ENCODE measurements at regions of chr4 and their contacts with region 1.

Region 1: GRCh38 chr4:158172261-158173258 is at the start of gene GASK1B:
- DNase-seq: peak in 4 of 5 donors; percentile 39 to 57 (median 50)
- ATAC-seq: peak; percentile 49 to 74 (median 65)
- H3K4me3 ChIP-seq: peak within 1 kb of the TSS; percentile 30 to 73 (median 67)
- H3K27ac ChIP-seq: peak within 1 kb of the TSS; percentile 82 to 93 (median 88)
- H3K4me1 ChIP-seq: peaks cover 0 to 64% (median 41%) of the 10 kb centered on the region in 12 donors
- H3K27me3 ChIP-seq: no peaks in the 10 kb centered on the region
- CTCF ChIP-seq: peak; percentile 41 to 78 (median 71)
- POLR2A ChIP-seq: no peak
- total RNA-seq, gene GASK1B: 34.5 to 108 (median 73.9) TPM

Region 2: DNA sequence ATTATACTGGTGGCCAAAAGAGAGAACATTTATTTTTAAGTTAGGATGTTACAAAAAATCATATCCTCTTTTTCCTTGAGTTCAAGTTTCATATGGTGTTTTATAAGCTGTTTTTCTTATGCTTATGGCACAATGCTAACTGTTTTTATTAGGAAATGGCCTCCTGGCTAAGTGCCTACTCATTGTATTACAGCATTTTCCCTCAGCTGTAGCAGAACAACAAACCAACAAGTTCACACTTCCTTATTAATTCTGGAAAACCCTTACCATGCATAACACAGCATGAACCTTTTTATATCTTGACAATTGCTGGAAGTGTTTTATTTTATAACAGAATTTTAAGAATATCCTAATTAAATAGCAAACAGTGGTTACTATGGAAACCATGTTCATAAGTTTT is 165.6 kb before region 1 on chr4:
- intact Hi-C with region 1: loop called in 2 of 10 experiments (anchors 5 kb)
- DNase-seq: peak in 2 of 5 donors; percentile 51 to 67
- ATAC-seq: peak; percentile 35 to 92 (median 77)
- H3K4me3 ChIP-seq: peak overlapping the region in 2 of 12 donors; percentile 1 to 6
- H3K27ac ChIP-seq: peak overlapping the region in 10 of 12 donors; percentile 47 to 79 (median 64)
- H3K4me1 ChIP-seq: peaks cover 0 to 76% (median 38%) of the 10 kb centered on the region in 12 donors
- H3K27me3 ChIP-seq: no peaks in the 10 kb centered on the region
- CTCF ChIP-seq: no peak
- POLR2A ChIP-seq: no peak

Region 3: GRCh38 chr4:158129694-158130093 is 42.9 kb before region 1 on chr4:
- intact Hi-C with region 1: loop called in 3 of 10 experiments (anchors 5 kb)
- DNase-seq: no peak
- ATAC-seq: peak in 1 of 4 donors; percentile 36
- H3K4me3 ChIP-seq: no peak overlapping the region
- H3K27ac ChIP-seq: no peak overlapping the region
- H3K4me1 ChIP-seq: peaks cover 0 to 38% (median 16%) of the 10 kb centered on the region in 12 donors
- H3K27me3 ChIP-seq: no peaks in the 10 kb centered on the region
- CTCF ChIP-seq: no peak
- POLR2A ChIP-seq: no peak

Region 4: GRCh38 chr4:158209825-158210807 is 37.6 kb after region 1 on chr4 and contains the start of gene TMEM144:
- intact Hi-C with region 1: loop called in 1 of 10 experiments (anchors 5 kb)
- DNase-seq: peak; percentile 90 to 96 (median 93)
- ATAC-seq: peak; percentile 99 to 100 (median 99)
- H3K4me3 ChIP-seq: peak within 1 kb of the TSS in 11 of 12 donors; percentile 18 to 61 (median 54)
- H3K27ac ChIP-seq: peak within 1 kb of the TSS; percentile 85 to 96 (median 91)
- H3K4me1 ChIP-seq: peaks cover 0 to 35% (median 9%) of the 10 kb centered on the region in 12 donors
- H3K27me3 ChIP-seq: no peaks in the 10 kb centered on the region
- CTCF ChIP-seq: peak in 6 of 12 donors; percentile 12 to 47 (median 35)
- POLR2A ChIP-seq: peak in 1 of 2 donors; percentile 72
- total RNA-seq, gene TMEM144: 6.8 to 17.7 (median 12.5) TPM

Region 5: DNA sequence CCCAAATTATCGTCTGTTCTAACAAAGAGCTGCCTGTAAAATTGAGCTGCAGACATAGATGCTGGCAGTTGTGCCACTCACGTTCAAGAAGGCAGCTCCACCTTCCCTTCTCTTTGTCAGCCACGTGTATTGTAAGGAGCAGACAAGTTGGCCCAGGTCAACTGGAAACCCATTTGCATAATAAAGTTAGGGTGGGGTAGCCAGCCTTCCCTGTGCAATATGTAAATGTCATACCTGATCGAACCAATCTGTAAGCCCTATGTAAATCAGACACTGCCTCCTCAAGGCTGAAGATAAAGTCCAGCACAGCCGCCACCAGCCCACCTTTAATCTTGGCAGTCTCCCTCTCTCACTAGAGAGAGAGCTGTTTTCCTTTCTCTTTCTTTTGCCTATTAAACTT is 155.0 kb after region 1 on chr4:
- intact Hi-C with region 1: no loop called
- DNase-seq: no peak
- ATAC-seq: no peak
- H3K4me3 ChIP-seq: no peak overlapping the region
- H3K27ac ChIP-seq: no peak overlapping the region
- H3K4me1 ChIP-seq: no peaks in the 10 kb centered on the region
- H3K27me3 ChIP-seq: no peaks in the 10 kb centered on the region
- CTCF ChIP-seq: no peak
- POLR2A ChIP-seq: no peak

Region 6: GRCh38 chr4:158671915-158672806 is 499.6 kb after region 1 on chr4 and contains the start of gene ETFDH:
- intact Hi-C with region 1: loop called in 1 of 10 experiments (anchors 5 kb)
- DNase-seq: peak; percentile 99 to 100 (median 100)
- ATAC-seq: peak; percentile 92 to 96 (median 95)
- H3K4me3 ChIP-seq: peak within 1 kb of the TSS; percentile 61 to 91 (median 80)
- H3K27ac ChIP-seq: peak within 1 kb of the TSS; percentile 93 to 98 (median 96)
- H3K4me1 ChIP-seq: peaks cover 0 to 47% (median 20%) of the 10 kb centered on the region in 12 donors
- H3K27me3 ChIP-seq: no peaks in the 10 kb centered on the region
- CTCF ChIP-seq: peak; percentile 44 to 84 (median 62)
- POLR2A ChIP-seq: peak in 1 of 2 donors; percentile 87
- total RNA-seq, gene ETFDH: 116 to 289 (median 221) TPM

Measured in heart left ventricle (tissue), 16 donors.